ENCODE measurements at regions of chr13 and their contacts with region 1.

Region 1: GRCh38 chr13:78978381-78978998 is 319.5 kb upstream of the OBI1 start:
- DNase-seq: peak in 6 of 9 donors; percentile 15 to 51 (median 40)
- ATAC-seq: peak; percentile 84
- H3K4me3 ChIP-seq: no peak overlapping the region
- H3K4me3 Mint-ChIP-seq: no peak overlapping the region
- H3K27ac ChIP-seq: no peak overlapping the region
- H3K27ac Mint-ChIP-seq: no peak overlapping the region
- H3K4me1 ChIP-seq: no peaks in the 10 kb centered on the region
- H3K4me1 Mint-ChIP-seq: no peaks in the 10 kb centered on the region
- H3K27me3 ChIP-seq: no peaks in the 10 kb centered on the region
- H3K27me3 Mint-ChIP-seq: peaks cover 9 to 37% (median 14%) of the 10 kb centered on the region in 5 donors

Region 2: GRCh38 chr13:77779552-77780272 is 1198.8 kb before region 1 on chr13:
- CTCF ChIA-PET with region 1: no interaction called
- POLR2A ChIA-PET with region 1: no interaction called
- intact Hi-C with region 1: loop called (anchors 1 to 10 kb)
- DNase-seq: peak in 5 of 9 donors; percentile 23 to 41 (median 25)
- ATAC-seq: peak; percentile 81
- H3K4me3 ChIP-seq: no peak overlapping the region
- H3K4me3 Mint-ChIP-seq: no peak overlapping the region
- H3K27ac ChIP-seq: no peak overlapping the region
- H3K27ac Mint-ChIP-seq: peak overlapping the region in 1 of 9 donors; percentile 16
- H3K4me1 ChIP-seq: no peaks in the 10 kb centered on the region
- H3K4me1 Mint-ChIP-seq: peaks cover 4 to 12% (median 8%) of the 10 kb centered on the region in 7 donors
- H3K27me3 ChIP-seq: no peaks in the 10 kb centered on the region
- H3K27me3 Mint-ChIP-seq: peaks cover 0 to 8% (median 2%) of the 10 kb centered on the region in 5 donors

Region 3: DNA sequence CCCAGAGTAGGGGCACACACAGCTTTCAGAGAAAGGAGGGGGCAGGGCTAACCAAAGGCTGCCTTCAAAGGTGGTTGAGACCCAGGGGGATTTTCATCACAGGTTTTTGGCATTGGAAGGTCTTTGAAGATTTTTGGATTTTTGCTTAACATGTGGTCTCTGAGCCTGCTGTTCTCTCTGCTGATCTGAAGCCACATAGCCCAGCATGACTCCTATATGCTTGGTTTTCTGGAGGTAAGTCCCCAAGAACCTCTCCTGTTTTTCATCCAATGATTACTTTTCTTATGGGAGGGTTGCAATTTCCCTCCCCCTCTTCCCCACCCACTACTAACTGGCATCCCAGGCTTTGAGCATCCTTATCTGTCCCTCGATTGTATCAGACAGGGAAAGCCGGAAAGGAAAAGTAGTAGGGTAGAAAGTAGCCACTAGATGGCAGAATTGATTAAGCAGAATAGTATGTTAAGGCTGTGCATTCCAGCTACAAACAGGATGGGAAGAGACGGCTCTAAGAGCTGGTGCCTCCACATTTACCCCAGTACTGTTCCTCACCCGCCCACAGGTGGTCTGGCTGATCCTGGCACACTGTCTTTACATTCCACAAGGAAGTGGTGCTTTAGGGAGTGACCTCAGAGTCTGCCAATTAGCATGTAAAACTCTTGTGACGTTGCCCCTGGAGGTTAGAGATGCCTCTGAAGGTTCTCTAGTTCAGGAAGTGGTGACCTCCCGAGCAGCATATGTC is 840.9 kb before region 1 on chr13:
- CTCF ChIA-PET with region 1: interaction called, 29 read pairs
- POLR2A ChIA-PET with region 1: no interaction called
- intact Hi-C with region 1: loop called (anchors 1 kb)
- DNase-seq: peak in 7 of 9 donors; percentile 7 to 41 (median 28)
- ATAC-seq: peak; percentile 76
- H3K4me3 ChIP-seq: no peak overlapping the region
- H3K4me3 Mint-ChIP-seq: peak overlapping the region in 9 of 10 donors; percentile 11 to 67 (median 42)
- H3K27ac ChIP-seq: no peak overlapping the region
- H3K27ac Mint-ChIP-seq: no peak overlapping the region
- H3K4me1 ChIP-seq: no peaks in the 10 kb centered on the region
- H3K4me1 Mint-ChIP-seq: peaks cover 3 to 7% (median 6%) of the 10 kb centered on the region in 7 donors
- H3K27me3 ChIP-seq: no peaks in the 10 kb centered on the region
- H3K27me3 Mint-ChIP-seq: peaks cover 0 to 4% (median 0%) of the 10 kb centered on the region in 5 donors

Region 4: DNA sequence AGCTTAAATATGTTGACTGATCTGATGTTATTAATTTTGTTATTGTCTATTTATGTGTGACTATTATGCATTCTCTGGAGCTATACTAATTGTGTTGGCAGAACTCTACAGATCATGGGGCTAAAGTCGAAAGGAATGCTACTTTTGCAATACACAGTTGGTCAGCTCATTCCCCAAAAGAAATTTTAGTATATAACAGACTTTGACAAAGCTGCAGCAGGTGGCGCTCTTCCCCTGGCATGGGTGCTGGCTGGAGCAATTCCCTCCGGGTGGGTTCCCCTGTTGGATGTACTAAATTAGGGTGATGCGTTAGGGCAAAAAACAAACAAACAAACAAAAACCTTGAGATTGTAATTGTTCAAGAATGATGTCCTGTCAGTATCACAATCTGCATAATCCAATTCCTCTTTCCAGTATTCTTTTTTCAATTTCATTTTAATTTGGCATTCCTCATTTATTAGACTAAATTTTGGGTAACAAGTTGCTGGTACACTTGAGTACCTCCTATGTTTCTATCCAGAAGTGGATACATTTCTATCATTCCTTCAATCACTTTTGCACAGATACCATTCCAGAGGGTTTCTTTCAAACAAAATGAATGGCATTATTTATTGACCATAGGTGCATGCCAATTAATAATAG is 737.1 kb before region 1 on chr13:
- CTCF ChIA-PET with region 1: no interaction called
- POLR2A ChIA-PET with region 1: no interaction called
- intact Hi-C with region 1: loop called in 1 of 2 experiments (anchors 1 kb)
- DNase-seq: no peak
- ATAC-seq: no peak
- H3K4me3 ChIP-seq: no peak overlapping the region
- H3K4me3 Mint-ChIP-seq: no peak overlapping the region
- H3K27ac ChIP-seq: no peak overlapping the region
- H3K27ac Mint-ChIP-seq: no peak overlapping the region
- H3K4me1 ChIP-seq: no peaks in the 10 kb centered on the region
- H3K4me1 Mint-ChIP-seq: no peaks in the 10 kb centered on the region
- H3K27me3 ChIP-seq: no peaks in the 10 kb centered on the region
- H3K27me3 Mint-ChIP-seq: peaks cover 0 to 7% (median 5%) of the 10 kb centered on the region in 5 donors

Region 5: DNA sequence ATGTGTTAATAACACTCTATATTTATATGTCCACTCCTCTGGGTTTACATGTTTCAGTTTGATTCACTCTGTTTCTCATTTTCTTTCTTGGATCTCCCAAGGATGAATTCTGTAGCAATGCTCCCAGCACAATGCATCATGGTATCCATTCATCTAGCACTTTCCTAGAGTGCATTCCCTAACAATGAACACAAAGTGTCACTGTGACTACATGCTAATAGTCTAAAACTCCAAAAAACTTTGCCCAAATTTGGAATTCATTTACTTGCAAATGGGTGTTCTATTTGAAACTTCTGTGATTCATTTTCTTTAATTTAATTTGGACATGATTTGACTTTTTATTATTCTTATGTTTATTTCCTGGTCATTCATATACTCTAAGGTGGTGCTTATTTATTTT is 661.5 kb before region 1 on chr13:
- CTCF ChIA-PET with region 1: no interaction called
- POLR2A ChIA-PET with region 1: no interaction called
- intact Hi-C with region 1: loop called in 1 of 2 experiments (anchors 1 kb)
- DNase-seq: no peak
- ATAC-seq: no peak
- H3K4me3 ChIP-seq: no peak overlapping the region
- H3K4me3 Mint-ChIP-seq: no peak overlapping the region
- H3K27ac ChIP-seq: no peak overlapping the region
- H3K27ac Mint-ChIP-seq: no peak overlapping the region
- H3K4me1 ChIP-seq: no peaks in the 10 kb centered on the region
- H3K4me1 Mint-ChIP-seq: no peaks in the 10 kb centered on the region
- H3K27me3 ChIP-seq: no peaks in the 10 kb centered on the region
- H3K27me3 Mint-ChIP-seq: peaks cover 0 to 4% (median 2%) of the 10 kb centered on the region in 5 donors